ENCODE measurements at regions of chr16 and their contacts with region 1.

Region 1: GRCh38 chr16:28609631-28610594 is at the start of gene SULT1A1:
- DNase-seq: no peak
- H3K4me3 Mint-ChIP-seq: no peak within 1 kb of the TSS
- H3K27ac Mint-ChIP-seq: no peak within 1 kb of the TSS
- H3K4me1 Mint-ChIP-seq: no peaks in the 10 kb centered on the region
- H3K27me3 Mint-ChIP-seq: no peaks in the 10 kb centered on the region
- total RNA-seq, gene SULT1A1: 8.4 and 8.9 TPM in 2 replicates

Region 2: GRCh38 chr16:28491970-28492474 is 117.9 kb before region 1 on chr16 and contains the start of gene CLN3:
- intact Hi-C with region 1: loop called (anchors 10 kb)
- DNase-seq: peak; percentile 84
- H3K4me3 Mint-ChIP-seq: peak within 1 kb of the TSS; percentile 89
- H3K27ac Mint-ChIP-seq: peak within 1 kb of the TSS; percentile 100
- H3K4me1 Mint-ChIP-seq: peaks cover 62% of the 10 kb centered on the region
- H3K27me3 Mint-ChIP-seq: no peaks in the 10 kb centered on the region
- total RNA-seq, gene CLN3: 27.1 and 28.5 TPM in 2 replicates

Region 3: DNA sequence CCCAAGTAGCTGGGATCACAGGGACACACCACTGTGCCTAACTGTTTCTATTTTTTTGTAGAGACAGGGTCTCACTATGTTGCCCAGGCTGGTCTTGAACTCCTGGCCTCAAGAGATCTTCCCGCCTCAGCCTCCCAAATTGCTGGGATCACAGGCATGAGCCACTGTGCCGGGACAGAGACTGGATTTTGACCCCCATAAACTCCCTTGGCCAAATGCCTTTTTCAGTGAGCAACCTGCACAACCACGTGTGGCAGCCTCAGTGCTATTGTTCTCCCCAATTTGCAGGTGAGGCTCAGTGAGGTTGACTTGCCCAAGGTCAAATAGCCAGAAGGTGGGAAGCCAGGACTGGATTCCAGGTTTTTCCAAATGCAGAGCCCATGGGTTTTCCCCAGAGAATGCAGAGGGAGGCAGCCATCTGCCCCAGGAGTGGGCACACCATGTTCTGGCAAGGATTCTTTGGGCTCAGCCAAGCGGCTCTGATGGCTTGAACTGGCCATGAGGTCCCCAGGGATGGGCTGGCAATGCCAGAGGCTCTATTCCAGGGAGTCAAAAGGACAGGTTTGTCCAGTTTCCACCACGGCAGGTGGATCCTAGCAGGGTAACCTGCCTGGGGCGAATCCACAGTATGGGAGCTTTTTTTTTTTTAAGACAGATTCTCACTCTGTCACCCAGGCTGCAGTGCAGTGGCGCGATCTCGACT is 105.1 kb before region 1 on chr16:
- intact Hi-C with region 1: no loop called
- DNase-seq: no peak
- H3K4me3 Mint-ChIP-seq: no peak overlapping the region
- H3K27ac Mint-ChIP-seq: no peak overlapping the region
- H3K4me1 Mint-ChIP-seq: peaks cover 25% of the 10 kb centered on the region
- H3K27me3 Mint-ChIP-seq: peaks cover 13% of the 10 kb centered on the region